HEK293 (cell line): ENCODE measurements at regions of chr12 and their contacts with region 1.

Region 1: DNA sequence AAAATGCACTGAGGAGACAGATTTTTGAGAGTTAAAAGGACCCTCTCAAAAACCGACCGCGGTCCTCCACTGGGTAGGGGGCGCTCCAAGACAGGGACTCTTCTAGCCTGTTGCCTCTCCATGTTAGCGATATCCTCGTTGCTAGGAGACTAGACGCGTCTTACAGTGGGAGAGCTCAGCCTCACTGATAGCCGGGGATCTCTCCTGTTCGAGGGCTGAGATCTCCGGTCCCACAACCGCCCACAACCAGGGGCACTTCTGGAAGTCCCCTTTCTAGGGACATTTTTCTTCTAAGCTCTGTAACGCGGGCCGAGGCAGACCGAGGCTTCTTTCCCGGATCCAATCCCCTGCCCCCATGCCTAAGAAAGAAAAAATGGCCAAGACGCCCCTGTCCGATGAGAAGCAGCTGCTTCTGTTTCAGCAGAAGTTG is 21.3 kb downstream of the FKBP11 start:
- H3K4me3 ChIP-seq: peak overlapping the region; percentile 46
- H3K27ac ChIP-seq: no peak overlapping the region
- H3K4me1 ChIP-seq: peaks cover 4% of the 10 kb centered on the region; the same call in 1 of the 2 replicates
- CTCF ChIP-seq: no peak

Region 2: DNA sequence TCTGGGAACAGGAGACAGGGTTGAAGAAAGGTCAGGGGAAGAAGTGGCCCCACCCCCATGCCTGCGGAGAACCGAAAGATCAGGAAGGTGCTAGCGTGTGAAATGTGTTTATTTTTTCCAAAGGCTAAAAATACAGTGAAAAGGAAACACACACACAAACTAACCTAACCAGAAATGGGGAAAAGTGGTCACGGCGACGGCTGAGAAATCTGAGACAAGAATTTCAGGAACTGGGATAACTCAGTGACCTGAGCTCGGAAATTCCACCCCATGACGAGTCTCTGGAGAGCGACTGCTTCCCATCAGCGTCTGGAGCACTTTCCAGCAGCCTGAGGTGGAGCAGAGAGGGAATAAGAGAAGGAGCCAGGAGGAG is 21.7 kb before region 1 on chr12:
- CTCF ChIA-PET with region 1: interaction called, 10 read pairs
- POLR2A ChIA-PET with region 1: no interaction called
- H3K4me3 ChIP-seq: no peak overlapping the region
- H3K27ac ChIP-seq: no peak overlapping the region
- H3K4me1 ChIP-seq: peaks cover 20% of the 10 kb centered on the region
- CTCF ChIP-seq: no peak

Region 3: GRCh38 chr12:48924617-48925303 is 20.8 kb after region 1 on chr12:
- CTCF ChIA-PET with region 1: interaction called, 15 read pairs
- POLR2A ChIA-PET with region 1: no interaction called
- H3K4me3 ChIP-seq: peak overlapping the region; percentile 38
- H3K27ac ChIP-seq: peak overlapping the region; percentile 49; the same call in 1 of the 2 replicates
- H3K4me1 ChIP-seq: no peaks in the 10 kb centered on the region
- CTCF ChIP-seq: no peak

Region 4: DNA sequence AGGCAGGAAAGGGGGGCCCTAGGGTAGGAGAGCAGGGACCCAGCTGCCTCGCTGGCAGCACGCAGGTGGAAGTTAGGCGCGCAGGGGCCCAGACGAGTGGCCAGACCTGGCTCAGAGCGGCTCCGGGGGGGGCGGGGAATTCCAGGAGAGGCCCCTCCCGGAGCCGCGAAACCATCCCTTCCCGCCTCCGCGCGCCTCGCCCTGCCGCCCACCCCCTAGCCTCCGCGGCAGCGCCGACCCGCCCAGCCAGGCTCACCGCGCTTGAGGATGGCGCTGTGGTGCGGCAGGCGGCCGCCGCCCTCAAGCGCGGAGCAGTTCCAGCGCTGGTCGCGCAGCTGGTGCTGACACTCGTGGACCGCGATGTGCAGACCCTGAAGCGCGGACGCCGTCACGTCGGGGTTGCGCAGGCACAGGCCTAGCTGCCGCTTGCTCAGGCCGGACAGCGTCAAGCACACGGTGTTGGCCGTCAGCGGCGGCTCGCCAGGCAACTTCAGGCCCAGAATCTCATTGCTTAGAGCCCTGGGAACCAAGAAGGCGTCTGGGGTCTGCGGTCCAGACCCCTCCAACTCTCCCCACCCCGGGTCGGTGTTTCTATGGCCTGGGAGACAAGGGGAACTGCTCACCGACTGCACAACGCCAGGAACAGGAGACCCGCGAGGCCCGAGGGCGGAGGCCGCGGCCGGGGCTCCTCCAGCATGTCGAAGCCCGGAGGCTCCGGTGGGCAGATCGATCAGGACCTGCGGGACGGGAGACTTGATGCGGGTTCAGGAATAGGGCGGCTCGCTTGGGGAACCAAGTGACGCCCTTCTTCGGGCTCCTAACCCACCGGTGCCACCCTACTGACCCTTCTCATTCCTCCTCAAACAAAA is 66.1 kb after region 1 on chr12:
- CTCF ChIA-PET with region 1: interaction called, 10 read pairs
- POLR2A ChIA-PET with region 1: no interaction called
- H3K4me3 ChIP-seq: no peak overlapping the region
- H3K27ac ChIP-seq: no peak overlapping the region
- H3K4me1 ChIP-seq: peaks cover 9% of the 10 kb centered on the region
- CTCF ChIP-seq: no peak